ENCODE measurements at regions of chr2 and their contacts with region 1.

Region 1: DNA sequence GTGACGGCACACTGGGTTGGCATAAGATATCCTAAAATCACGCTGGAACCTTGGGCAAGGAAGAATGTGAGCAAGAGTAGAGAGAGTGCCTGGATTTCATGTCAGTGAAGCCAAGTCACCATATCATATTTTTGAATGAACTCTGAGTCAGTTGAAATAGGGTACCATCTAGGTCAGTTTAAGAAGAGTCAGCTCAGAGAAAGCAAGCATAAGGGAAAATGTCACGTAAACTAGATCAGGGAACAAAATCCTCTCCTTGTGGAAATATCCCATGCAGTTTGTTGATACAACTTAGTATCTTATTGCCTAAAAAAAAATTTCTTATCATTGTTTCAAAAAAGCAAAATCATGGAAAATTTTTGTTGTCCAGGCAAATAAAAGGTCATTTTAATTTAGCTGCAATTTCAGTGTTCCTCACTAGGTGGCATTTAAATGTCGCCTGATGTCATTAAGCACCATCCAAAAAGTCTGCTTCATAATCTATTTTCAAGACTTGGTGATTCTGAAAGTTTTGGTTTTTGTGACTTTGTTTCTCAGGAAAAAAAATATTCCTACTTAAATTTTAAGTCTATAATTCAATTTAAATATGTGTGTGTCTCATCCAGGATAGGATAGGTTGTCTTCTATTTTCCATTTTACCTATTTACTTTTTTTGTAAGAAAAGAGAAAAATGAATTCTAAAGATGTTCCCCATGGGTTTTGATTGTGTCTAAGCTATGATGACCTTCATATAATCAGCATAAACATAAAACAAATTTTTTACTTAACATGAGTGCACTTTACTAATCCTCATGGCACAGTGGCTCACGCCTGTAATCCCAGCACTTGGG is 19.6 kb downstream of the RSAD2 start:
- DNase-seq: peak; percentile 72
- ATAC-seq: peak; percentile 56
- H3K4me3 ChIP-seq: no peak overlapping the region
- H3K27ac ChIP-seq: no peak overlapping the region
- H3K4me1 ChIP-seq: no peaks in the 10 kb centered on the region
- H3K27me3 ChIP-seq: no peaks in the 10 kb centered on the region
- CTCF ChIP-seq: peak; percentile 84

Region 2: DNA sequence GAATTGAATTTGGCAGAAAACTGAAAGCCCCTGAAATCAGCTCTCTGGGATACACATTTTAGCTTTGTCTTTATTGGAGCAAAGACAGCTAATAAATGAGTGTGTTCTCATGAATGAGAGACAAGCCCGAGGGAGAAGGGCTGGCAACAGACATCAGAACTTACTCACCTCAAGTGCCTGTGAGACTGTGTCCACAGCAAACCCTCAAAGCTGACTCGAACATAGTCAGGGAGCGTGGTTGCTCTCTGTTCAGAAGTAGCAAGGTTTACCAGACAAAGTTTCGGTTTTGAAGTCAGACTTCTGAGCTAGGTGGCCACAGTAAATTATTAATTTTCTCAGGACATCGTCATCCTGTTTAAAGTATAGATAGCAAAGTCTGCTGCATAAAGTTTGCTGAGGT is 239.3 kb before region 1 on chr2:
- CTCF ChIA-PET with region 1: no interaction called
- POLR2A ChIA-PET with region 1: no interaction called
- intact Hi-C with region 1: no loop called
- DNase-seq: no peak
- ATAC-seq: no peak
- H3K4me3 ChIP-seq: no peak overlapping the region
- H3K27ac ChIP-seq: no peak overlapping the region
- H3K4me1 ChIP-seq: no peaks in the 10 kb centered on the region
- H3K27me3 ChIP-seq: peaks cover 12% of the 10 kb centered on the region
- CTCF ChIP-seq: no peak

Region 3: DNA sequence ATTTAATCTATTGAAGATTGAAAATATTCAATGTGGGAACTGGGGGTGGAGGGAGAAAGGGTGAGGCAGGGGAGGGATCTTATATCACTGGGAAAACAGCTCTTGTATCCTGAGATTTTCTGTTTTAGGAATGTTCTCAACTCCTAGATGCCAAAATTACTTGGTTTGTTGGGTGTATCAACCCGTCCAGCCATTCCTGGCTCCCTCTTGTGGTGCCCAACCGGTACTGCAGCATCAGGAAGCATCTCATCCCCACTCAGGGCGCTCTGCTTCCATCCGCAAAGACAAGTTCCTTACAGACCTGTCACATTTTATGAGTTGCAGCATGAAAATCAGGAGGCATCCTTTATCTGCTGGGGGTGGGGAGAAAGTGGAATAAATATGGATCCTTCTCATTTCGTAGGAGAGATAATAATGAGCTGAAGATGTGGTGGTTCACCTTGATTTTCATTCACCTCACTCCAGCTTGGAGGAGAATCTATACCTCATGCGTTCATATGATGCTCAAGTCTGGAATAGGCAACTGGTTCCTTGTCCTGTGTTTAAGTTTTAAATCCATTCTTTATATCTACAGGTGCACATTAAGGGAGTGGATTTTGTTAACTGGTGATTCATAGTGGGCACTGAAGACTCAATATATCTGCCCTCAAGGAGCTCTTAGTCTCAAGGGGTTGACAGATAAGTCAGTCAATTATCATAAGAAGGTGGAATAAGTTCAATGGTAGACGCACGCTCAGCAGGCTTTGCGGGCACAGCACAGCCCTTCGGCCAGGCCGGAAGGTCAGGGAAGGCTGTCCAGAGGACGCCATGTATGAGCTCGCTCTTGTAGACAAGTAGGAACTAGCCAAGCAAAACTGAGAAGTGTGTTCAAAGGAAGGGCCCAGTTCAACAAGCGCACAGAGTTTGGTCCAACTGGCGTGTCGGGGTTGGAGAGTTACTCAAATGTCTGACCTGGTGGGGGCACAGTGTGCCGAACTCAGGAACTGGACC is 147.4 kb after region 1 on chr2:
- CTCF ChIA-PET with region 1: interaction called, 6 read pairs
- POLR2A ChIA-PET with region 1: no interaction called
- intact Hi-C with region 1: loop called (anchors 2 kb)
- DNase-seq: peak; percentile 76
- ATAC-seq: peak; percentile 82
- H3K4me3 ChIP-seq: no peak overlapping the region
- H3K27ac ChIP-seq: no peak overlapping the region
- H3K4me1 ChIP-seq: 0 out of 2 replicates have a peak, but pooled peaks cover 4% of the 10 kb centered on the region
- H3K27me3 ChIP-seq: no peaks in the 10 kb centered on the region
- CTCF ChIP-seq: peak; percentile 94

Region 4: GRCh38 chr2:7083577-7084509 is 186.7 kb after region 1 on chr2:
- CTCF ChIA-PET with region 1: interaction called, 3 read pairs
- POLR2A ChIA-PET with region 1: no interaction called
- intact Hi-C with region 1: loop called (anchors 2 kb)
- DNase-seq: peak; percentile 77
- ATAC-seq: peak; percentile 74
- H3K4me3 ChIP-seq: no peak overlapping the region
- H3K27ac ChIP-seq: no peak overlapping the region
- H3K4me1 ChIP-seq: no peaks in the 10 kb centered on the region; the same call in 1 of the 2 replicates
- H3K27me3 ChIP-seq: 0 out of 2 replicates have a peak, but pooled peaks cover 6% of the 10 kb centered on the region
- CTCF ChIP-seq: peak; percentile 85

Region 5: DNA sequence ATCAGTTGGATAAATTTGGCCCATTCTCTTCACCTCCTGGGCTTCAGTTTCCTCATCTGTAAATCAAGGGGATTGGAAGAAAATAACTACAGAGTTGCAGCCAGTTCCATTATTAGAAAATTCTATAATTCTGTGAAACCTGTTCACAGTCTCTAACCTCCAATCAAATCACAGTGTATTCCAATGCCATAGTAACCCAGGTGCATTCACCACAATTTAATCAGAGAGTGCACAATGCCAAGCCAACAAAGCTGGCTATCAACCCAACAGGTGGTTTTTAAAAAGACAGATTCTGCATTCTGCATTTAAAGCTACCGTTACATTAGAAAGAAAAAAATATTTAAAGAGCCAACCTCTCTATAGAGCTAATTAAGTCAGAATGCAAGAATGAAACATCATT is 328.7 kb after region 1 on chr2:
- CTCF ChIA-PET with region 1: no interaction called
- POLR2A ChIA-PET with region 1: interaction called, 11 read pairs
- intact Hi-C with region 1: no loop called
- DNase-seq: no peak
- ATAC-seq: no peak
- H3K4me3 ChIP-seq: no peak overlapping the region
- H3K27ac ChIP-seq: no peak overlapping the region
- H3K4me1 ChIP-seq: no peaks in the 10 kb centered on the region
- H3K27me3 ChIP-seq: 0 out of 2 replicates have a peak, but pooled peaks cover 4% of the 10 kb centered on the region
- CTCF ChIP-seq: no peak